ENCODE measurements at regions of chr3 and their contacts with region 1.

Region 1: DNA sequence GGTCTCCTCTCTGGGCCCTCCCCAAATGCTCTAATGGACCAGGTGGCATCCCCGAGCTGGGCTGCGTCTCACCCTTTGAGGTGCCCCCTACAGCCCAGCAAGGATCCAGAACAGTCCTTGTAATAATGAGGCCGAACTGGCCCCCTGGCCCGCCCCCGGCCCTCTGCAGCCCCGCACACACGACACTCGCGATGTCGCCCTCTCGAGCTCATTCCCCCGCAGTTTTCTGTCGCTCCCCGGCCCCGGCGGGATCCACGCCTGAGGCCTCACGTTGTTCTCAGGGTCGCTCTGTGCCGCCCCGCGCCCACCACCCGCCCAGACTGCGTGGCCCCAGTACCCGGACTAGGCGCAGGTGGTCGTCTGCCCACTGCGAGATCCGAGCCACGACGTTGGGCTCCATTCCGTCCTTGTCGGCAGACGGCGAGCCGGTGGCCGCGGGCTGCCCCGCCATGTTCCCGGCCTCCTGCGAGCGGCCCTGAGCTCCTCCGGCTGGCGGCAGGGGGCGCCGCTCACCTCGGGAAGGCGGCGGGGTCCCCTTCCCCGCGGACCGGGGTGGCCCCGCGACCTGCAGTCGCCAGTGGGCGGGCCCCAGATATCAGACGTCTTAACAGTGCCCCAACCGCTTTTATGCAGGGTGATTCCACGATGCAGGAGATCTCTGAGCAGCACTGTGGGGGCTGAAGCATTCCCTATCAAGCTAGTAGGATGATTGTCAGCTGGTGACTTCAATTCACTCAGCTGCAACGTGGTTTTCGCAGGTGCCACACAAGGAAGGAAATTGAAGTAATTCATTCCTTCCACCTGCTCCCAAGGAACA is at the start of gene C3orf33:
- H3K4me3 ChIP-seq: peak within 1 kb of the TSS; percentile 61
- H3K27ac ChIP-seq: peak within 1 kb of the TSS; percentile 58; the same call in 1 of the 2 replicates
- H3K4me1 ChIP-seq: no peaks in the 10 kb centered on the region
- CTCF ChIP-seq: peak; percentile 85

Region 2: GRCh38 chr3:155792532-155792931 is 13.5 kb before region 1 on chr3:
- CTCF ChIA-PET with region 1: interaction called, 10 read pairs
- POLR2A ChIA-PET with region 1: interaction called, 3 read pairs
- H3K4me3 ChIP-seq: no peak overlapping the region
- H3K27ac ChIP-seq: no peak overlapping the region
- H3K4me1 ChIP-seq: no peaks in the 10 kb centered on the region
- CTCF ChIP-seq: no peak